Activated naive CD4-positive, alpha-beta T cell treated with anti-CD3 and anti-CD28 coated beads for 36 hours (primary cell): ENCODE measurements at regions of chrX and their contacts with region 1.

Region 1: DNA sequence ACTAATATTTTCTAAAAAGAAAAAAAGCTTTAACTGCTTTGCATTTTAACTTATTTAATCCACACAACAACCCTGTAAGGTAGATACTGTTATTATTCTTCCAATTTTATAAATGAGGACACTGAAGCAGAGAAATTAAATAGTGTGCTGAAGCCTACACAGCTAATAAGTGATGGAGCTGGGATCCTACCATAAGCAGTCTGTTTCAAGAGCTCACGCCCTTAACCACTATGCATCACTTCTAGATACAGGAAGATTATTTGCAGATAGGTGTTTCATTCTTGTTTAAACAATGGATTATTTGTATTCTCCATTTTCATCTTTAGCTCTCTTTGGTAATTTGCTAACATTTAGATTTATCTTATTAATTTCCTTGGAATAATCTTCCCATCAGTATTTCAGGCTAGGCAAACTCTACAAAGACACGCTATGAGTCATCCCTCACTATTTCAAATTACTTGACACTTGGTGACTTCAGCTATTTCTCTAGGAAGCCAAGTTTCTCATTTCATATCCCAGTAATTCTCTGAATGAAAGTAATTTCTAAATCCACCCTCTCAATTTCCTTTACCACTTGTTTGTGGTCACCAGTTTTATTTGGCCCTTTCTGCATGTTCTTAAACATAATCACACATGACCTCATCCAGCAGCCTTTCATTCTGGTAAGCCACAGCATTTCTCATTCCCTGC is 67.3 kb downstream of the ASB9 start:
- DNase-seq: no peak
- H3K4me3 Mint-ChIP-seq: no peak overlapping the region
- H3K27ac Mint-ChIP-seq: no peak overlapping the region
- H3K4me1 Mint-ChIP-seq: peaks cover 37% of the 10 kb centered on the region
- H3K27me3 Mint-ChIP-seq: no peaks in the 10 kb centered on the region

Region 2: GRCh38 chrX:13545726-13546125 is 1656.9 kb before region 1 on chrX:
- CTCF ChIA-PET with region 1: no interaction called
- intact Hi-C with region 1: loop called (anchors 5 kb)
- DNase-seq: no peak
- H3K4me3 Mint-ChIP-seq: no peak overlapping the region
- H3K27ac Mint-ChIP-seq: no peak overlapping the region
- H3K4me1 Mint-ChIP-seq: peaks cover 13% of the 10 kb centered on the region
- H3K27me3 Mint-ChIP-seq: peaks cover 2% of the 10 kb centered on the region

Region 3: DNA sequence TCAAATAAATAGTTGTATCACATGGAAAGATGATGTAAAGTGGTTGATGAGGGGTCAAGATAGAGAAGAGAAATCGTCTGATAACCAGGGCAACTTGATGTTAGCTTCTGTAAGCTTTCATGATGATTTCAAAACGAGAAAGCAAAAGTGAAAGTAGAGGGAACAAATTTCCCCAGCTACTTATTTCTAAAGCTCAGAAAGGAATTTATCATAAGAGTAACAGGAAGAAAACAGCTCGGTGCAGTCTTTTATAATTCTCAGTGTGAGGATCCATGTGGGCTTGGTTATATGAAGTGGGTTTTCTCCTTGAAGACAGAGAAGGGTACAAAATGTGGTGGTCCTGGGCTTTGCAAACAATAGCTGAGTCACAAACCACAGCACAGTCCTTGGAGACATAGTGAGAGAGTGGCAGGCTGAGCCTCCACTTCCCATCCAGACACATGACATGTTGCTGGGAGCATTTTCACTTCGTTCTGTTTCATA is 705.4 kb before region 1 on chrX:
- CTCF ChIA-PET with region 1: no interaction called
- intact Hi-C with region 1: loop called (anchors 2 kb)
- DNase-seq: peak; percentile 14
- H3K4me3 Mint-ChIP-seq: peak overlapping the region; percentile 71
- H3K27ac Mint-ChIP-seq: peak overlapping the region; percentile 91
- H3K4me1 Mint-ChIP-seq: peaks cover 16% of the 10 kb centered on the region
- H3K27me3 Mint-ChIP-seq: no peaks in the 10 kb centered on the region

Region 4: GRCh38 chrX:14883826-14884225 is 318.8 kb before region 1 on chrX:
- CTCF ChIA-PET with region 1: no interaction called
- intact Hi-C with region 1: loop called (anchors 1 kb)
- DNase-seq: no peak
- H3K4me3 Mint-ChIP-seq: peak overlapping the region; percentile 63
- H3K27ac Mint-ChIP-seq: peak overlapping the region; percentile 94
- H3K4me1 Mint-ChIP-seq: peaks cover 60% of the 10 kb centered on the region
- H3K27me3 Mint-ChIP-seq: no peaks in the 10 kb centered on the region

Region 5: DNA sequence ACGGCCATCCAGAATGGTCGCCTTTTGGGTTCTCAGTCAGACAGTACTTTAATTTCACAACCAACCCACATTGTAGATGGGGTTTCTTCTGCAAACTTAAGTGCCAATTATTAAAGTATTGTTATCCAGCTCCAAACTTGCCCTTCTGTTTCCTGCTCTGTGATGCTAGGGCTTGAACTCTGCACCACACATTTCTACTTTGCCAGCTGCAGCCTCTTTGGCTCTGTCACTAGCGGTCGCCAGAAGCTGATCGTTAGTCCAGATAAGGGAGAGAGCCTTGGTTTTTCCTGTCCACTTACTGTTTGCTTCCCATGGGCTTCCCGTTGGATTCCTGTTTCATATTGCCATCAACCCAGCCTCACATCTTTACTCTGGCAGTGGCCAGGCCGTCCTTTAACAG is 129.3 kb before region 1 on chrX:
- CTCF ChIA-PET with region 1: no interaction called
- intact Hi-C with region 1: no loop called
- DNase-seq: no peak
- H3K4me3 Mint-ChIP-seq: no peak overlapping the region
- H3K27ac Mint-ChIP-seq: no peak overlapping the region
- H3K4me1 Mint-ChIP-seq: no peaks in the 10 kb centered on the region
- H3K27me3 Mint-ChIP-seq: peaks cover 6% of the 10 kb centered on the region

Region 6: GRCh38 chrX:15158736-15159406 is 43.7 kb before region 1 on chrX:
- CTCF ChIA-PET with region 1: no interaction called
- intact Hi-C with region 1: loop called (anchors 1 kb)
- DNase-seq: peak; percentile 51
- H3K4me3 Mint-ChIP-seq: peak overlapping the region; percentile 54
- H3K27ac Mint-ChIP-seq: peak overlapping the region; percentile 53
- H3K4me1 Mint-ChIP-seq: peaks cover 35% of the 10 kb centered on the region
- H3K27me3 Mint-ChIP-seq: no peaks in the 10 kb centered on the region

Region 7: DNA sequence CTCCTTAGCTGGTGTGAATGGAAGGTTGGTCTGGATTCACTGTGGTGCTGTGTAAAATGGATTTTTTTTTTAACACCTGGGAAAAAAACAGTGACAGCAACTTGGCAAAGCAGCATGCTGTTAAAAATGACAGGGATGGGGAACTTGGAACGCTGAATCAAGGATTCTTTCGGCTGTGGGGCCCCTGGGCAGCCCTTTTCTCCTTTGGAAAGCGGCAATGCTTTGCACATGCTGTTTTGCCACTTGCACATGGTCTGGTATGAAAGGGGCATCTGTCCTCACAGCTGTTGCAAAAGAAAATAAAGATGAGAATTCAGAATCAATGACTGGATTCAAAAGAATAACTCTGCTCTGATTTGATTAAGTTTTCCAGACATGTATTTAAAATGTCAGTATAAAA is 143.4 kb after region 1 on chrX:
- CTCF ChIA-PET with region 1: no interaction called
- intact Hi-C with region 1: no loop called
- DNase-seq: no peak
- H3K4me3 Mint-ChIP-seq: no peak overlapping the region
- H3K27ac Mint-ChIP-seq: no peak overlapping the region
- H3K4me1 Mint-ChIP-seq: no peaks in the 10 kb centered on the region
- H3K27me3 Mint-ChIP-seq: peaks cover 8% of the 10 kb centered on the region

Region 8: GRCh38 chrX:15956676-15957075 is 754.1 kb after region 1 on chrX:
- CTCF ChIA-PET with region 1: no interaction called
- intact Hi-C with region 1: no loop called
- DNase-seq: no peak
- H3K4me3 Mint-ChIP-seq: no peak overlapping the region
- H3K27ac Mint-ChIP-seq: no peak overlapping the region
- H3K4me1 Mint-ChIP-seq: no peaks in the 10 kb centered on the region
- H3K27me3 Mint-ChIP-seq: no peaks in the 10 kb centered on the region